GM10248 (cell line): ENCODE measurements at regions of chr7 and their contacts with region 1.

Region 1: GRCh38 chr7:150356265-150356897 is 12.2 kb upstream of the REPIN1 start:
- DNase-seq: peak; percentile 60
- CTCF ChIP-seq: peak; percentile 47

Region 2: GRCh38 chr7:149669121-149669818 is 687.1 kb before region 1 on chr7:
- CTCF ChIA-PET with region 1: no interaction called
- POLR2A ChIA-PET with region 1: no interaction called
- DNase-seq: no peak
- CTCF ChIP-seq: peak; percentile 40

Region 3: GRCh38 chr7:150311711-150312110 is 44.7 kb before region 1 on chr7:
- CTCF ChIA-PET with region 1: interaction called, 10 read pairs
- POLR2A ChIA-PET with region 1: no interaction called
- DNase-seq: no peak
- CTCF ChIP-seq: no peak

Region 4: GRCh38 chr7:150329331-150330120 is 26.9 kb before region 1 on chr7:
- CTCF ChIA-PET with region 1: interaction called, 10 read pairs
- POLR2A ChIA-PET with region 1: no interaction called
- DNase-seq: no peak
- CTCF ChIP-seq: no peak

Region 5: GRCh38 chr7:150368096-150368883 is 11.9 kb after region 1 on chr7 and contains the start of gene REPIN1:
- CTCF ChIA-PET with region 1: interaction called, 66 read pairs
- POLR2A ChIA-PET with region 1: interaction called, 5 read pairs
- DNase-seq: peak; percentile 90
- CTCF ChIP-seq: no peak

Region 6: DNA sequence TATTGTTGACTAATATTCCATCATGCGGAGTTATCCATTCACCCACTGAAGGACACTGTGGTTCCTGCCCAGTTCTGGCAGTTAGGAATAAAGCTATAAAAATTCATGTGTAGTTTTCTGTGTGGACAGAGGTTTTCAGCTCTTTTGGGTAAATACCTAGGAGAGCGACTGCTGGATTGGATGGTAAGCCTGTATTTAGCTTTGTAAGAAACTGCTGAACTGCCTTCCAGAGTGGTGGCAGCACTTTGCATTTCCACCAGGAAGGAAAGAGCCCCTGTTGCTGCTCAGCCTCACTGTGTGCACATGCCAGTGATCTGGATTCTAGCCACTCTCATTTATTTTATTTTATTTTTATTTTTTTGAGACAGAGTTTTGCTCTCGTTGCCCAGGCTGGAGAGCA is 36.9 kb after region 1 on chr7:
- CTCF ChIA-PET with region 1: no interaction called
- POLR2A ChIA-PET with region 1: no interaction called
- DNase-seq: no peak
- CTCF ChIP-seq: no peak

Region 7: GRCh38 chr7:150404805-150405583 is 48.6 kb after region 1 on chr7:
- CTCF ChIA-PET with region 1: interaction called, 17 read pairs
- POLR2A ChIA-PET with region 1: no interaction called
- DNase-seq: peak; percentile 87
- CTCF ChIP-seq: peak; percentile 45

Region 8: GRCh38 chr7:150476819-150477631 is 120.6 kb after region 1 on chr7:
- CTCF ChIA-PET with region 1: no interaction called
- POLR2A ChIA-PET with region 1: no interaction called
- DNase-seq: no peak
- CTCF ChIP-seq: no peak